AG04450 (cell line): ENCODE measurements at regions of chr1 and their contacts with region 1.

Region 1: DNA sequence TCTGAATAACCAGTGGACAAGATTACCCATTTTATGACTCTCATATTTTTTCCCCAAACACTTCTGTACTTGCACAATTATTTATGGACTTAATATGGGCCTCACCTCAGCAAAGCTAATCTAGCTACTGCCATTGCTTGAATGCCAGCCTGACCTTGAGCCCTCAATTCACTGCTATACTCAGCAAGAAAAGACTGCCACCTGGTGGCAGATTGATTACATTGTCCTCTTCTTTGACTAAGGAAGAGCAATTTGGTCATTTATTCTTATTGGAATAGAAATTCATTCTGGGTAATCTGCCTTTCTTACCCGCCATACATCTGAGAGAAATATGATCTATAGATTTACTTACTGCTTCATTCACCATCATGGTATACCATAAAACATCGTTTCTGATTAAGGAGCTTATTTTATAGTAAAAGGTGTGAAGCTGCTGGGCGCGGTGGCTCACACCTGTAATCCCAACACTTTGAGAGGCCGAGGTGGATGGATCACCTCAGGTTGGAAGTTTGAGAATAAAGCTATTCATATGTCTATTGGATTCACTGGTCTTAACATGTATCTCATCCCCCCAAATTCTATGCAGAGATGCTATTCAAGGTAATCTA is 32.9 kb upstream of the DIPK1A start:
- DNase-seq: peak; percentile 74
- H3K4me3 ChIP-seq: no peak overlapping the region
- H3K27ac ChIP-seq: no peak overlapping the region
- H3K27me3 ChIP-seq: peaks cover 12% of the 10 kb centered on the region
- CTCF ChIP-seq: peak; percentile 79

Region 2: GRCh38 chr1:92749024-92749634 is 245.1 kb before region 1 on chr1:
- CTCF ChIA-PET with region 1: interaction called, 12 read pairs
- POLR2A ChIA-PET with region 1: no interaction called
- DNase-seq: no peak
- H3K4me3 ChIP-seq: no peak overlapping the region
- H3K27ac ChIP-seq: no peak overlapping the region
- H3K27me3 ChIP-seq: no peaks in the 10 kb centered on the region
- CTCF ChIP-seq: peak; percentile 78

Region 3: DNA sequence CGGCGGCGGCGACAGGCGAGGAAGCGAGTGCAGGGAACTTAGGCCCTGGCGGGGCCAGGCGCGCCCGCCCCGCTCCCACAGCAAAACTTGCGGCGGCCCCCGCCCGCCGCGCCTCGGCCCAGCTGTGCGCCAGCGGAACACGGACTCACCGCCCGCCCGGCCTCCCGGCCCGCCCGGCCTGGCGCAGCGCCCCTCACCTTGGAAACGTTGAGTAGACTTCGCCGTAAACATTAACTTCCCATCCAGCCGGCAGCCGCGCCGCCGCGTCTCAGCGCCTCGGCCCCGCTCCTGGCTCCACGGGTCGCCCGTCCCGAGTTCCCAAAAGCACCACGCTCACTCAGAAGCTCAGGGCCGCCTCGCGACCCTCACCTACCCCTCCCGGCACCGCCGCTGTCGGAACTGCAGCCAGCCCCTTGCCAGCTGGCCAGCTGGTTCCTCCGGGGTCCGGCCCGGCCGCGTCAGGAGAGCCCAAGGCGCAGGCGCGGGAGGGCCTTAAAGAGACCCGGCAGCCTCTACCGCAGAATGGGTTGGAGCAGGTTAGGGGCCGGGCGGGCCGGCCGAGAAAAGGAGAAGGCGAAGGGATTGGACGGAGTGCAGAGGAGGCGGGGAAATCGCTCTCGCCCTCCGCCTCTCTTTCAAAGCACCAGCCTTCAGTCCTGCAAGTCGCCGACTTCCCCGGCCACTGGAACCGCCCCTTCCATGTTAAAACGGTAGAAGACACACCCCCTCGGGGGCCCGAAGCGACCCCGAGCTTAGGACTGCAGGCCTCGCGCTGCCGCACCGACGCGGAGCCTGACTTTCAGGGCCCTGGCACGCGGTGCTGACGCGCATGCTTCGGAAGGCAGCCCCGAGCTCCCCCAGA is 209.3 kb before region 1 on chr1 and contains the start of gene EVI5:
- CTCF ChIA-PET with region 1: no interaction called
- POLR2A ChIA-PET with region 1: no interaction called
- DNase-seq: peak; percentile 94
- H3K4me3 ChIP-seq: peak within 1 kb of the TSS; percentile 82
- H3K27ac ChIP-seq: peak within 1 kb of the TSS; percentile 90
- H3K27me3 ChIP-seq: no peaks in the 10 kb centered on the region
- CTCF ChIP-seq: no peak; the same call in 1 of the 2 replicates
- polyA plus RNA-seq, gene EVI5: 19.9 and 28.5 TPM in 2 replicates

Region 4: DNA sequence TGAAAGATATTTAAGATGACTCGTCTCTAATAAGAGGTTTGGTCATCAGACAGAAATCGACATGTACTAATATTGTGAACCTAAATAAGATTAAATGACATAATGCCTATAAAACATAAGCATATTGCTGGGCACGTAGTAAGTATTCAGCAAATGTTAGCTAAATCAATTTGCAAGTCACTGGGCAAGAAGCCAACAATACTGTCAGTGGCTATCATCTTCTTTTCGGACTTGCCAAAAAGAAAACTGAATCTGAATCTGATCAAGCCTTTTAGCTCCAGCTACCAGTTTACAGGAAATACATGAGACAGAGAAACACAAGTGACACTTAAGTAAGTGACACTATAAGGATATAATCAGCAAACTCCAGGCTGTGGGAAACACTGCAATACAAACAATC is 116.4 kb before region 1 on chr1:
- CTCF ChIA-PET with region 1: interaction called, 28 read pairs
- POLR2A ChIA-PET with region 1: no interaction called
- DNase-seq: no peak
- H3K4me3 ChIP-seq: no peak overlapping the region
- H3K27ac ChIP-seq: no peak overlapping the region
- H3K27me3 ChIP-seq: no peaks in the 10 kb centered on the region
- CTCF ChIP-seq: no peak

Region 5: DNA sequence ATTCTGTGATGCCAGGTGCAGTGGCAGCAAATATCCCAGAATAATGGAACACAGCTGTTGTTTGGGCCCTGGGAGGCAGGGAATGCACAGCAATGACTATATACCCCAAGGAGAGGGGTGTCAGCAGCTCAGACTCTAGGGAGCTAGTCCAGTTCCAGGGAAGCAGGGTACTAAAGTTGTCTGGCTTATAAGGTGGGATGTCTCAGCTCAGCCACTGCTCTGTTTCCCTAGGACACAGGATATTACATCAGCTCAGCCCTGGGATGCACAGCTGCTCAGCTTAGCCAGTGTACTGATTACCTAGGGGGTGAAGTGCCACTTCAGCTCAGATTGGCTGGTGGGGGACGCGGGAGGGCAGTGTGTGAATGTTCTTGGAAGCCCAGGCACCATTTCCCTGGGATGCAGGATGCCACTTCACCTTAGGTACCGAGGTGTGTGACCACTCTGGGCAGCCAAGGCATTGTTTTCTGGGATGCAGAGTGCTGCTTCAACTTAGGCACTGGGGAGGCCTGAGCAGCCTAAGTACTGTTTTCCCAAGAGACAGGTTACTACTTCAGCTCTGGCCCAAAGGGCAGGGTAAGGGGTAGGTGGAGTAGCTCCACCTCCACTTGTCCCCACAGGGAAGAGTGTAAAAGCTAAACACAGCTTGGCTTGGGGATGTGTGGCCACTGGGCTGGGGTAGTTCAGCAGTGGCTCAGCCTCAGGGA is 92.4 kb before region 1 on chr1:
- CTCF ChIA-PET with region 1: interaction called, 10 read pairs
- POLR2A ChIA-PET with region 1: no interaction called
- DNase-seq: no peak
- H3K4me3 ChIP-seq: no peak overlapping the region
- H3K27ac ChIP-seq: no peak overlapping the region
- H3K27me3 ChIP-seq: no peaks in the 10 kb centered on the region
- CTCF ChIP-seq: no peak

Region 6: GRCh38 chr1:92968138-92969032 is 25.8 kb before region 1 on chr1:
- CTCF ChIA-PET with region 1: interaction called, 51 read pairs
- POLR2A ChIA-PET with region 1: no interaction called
- DNase-seq: no peak
- H3K4me3 ChIP-seq: no peak overlapping the region
- H3K27ac ChIP-seq: no peak overlapping the region
- H3K27me3 ChIP-seq: peaks cover 15% of the 10 kb centered on the region
- CTCF ChIP-seq: peak; percentile 66

Region 7: DNA sequence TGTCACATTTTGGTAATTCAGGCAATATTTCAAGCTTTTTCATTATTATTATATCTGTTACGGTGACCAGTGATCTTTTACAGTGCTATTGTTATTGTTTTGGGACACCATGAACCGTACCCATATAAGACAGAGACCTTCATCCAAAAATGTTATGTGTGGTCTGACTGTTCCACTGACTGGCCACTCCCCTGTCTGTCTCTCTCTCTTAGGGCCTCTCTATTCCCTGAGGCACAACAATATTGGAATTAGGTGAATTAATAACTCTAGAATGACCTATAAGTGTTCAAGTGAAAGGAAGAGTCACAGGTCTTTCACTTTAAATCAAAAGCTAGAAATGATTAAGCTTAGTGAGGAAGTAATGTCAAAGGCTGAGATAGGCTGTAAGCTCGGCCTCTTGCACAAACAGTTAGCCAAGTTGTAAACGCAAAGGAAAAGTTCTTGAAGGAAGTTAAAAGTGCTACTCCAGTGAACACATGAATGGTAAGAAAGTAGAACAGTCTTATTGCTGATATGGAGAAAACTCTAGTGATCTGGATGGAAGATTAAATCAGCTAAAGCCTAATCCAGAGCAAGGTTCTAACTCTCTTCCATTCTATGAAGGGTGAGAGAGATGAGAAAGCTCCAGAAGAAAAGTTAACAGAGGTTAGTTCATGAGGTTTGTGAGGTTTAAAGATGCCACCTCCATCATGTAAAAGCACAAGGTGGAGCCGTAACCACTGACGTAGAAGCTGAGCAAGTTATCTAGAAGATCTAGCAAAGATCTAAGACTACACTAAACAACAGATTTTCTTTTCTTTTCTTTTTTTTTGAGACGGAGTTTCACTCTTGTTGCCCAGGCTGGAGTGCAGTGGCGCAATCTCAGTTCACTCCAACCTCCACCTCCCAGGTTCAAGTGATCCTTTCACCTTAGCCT is 13.2 kb before region 1 on chr1:
- CTCF ChIA-PET with region 1: interaction called, 17 read pairs
- POLR2A ChIA-PET with region 1: no interaction called
- DNase-seq: no peak
- H3K4me3 ChIP-seq: no peak overlapping the region
- H3K27ac ChIP-seq: no peak overlapping the region
- H3K27me3 ChIP-seq: peaks cover 3% of the 10 kb centered on the region
- CTCF ChIP-seq: no peak

Region 8: DNA sequence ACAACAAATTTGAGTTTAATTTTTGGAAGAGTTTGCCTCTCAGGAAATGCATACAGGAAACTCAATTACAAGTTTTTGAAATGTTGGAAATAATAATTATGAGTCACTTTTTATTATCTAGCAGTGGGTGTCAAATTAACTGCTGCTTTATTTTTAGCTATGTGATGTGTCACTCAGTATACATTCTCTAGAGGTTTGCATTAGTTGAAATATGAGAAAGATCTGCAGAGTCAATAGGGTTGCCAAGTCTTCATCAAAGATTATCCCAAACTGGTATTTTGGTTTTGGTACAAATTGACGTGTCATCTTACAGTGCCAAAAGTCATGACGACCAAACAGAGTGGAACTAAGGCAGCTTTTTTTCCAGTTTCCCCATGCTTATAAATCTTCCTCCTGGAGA is 21.4 kb after region 1 on chr1:
- CTCF ChIA-PET with region 1: interaction called, 12 read pairs
- POLR2A ChIA-PET with region 1: no interaction called
- DNase-seq: no peak
- H3K4me3 ChIP-seq: no peak overlapping the region
- H3K27ac ChIP-seq: no peak overlapping the region
- H3K27me3 ChIP-seq: peaks cover 10% of the 10 kb centered on the region
- CTCF ChIP-seq: no peak